Spleen (tissue), 13 donors: ENCODE measurements at regions of chr1 and their contacts with region 1.

Region 1: GRCh38 chr1:107529502-107530149 is 388.8 kb downstream of the NTNG1 start:
- DNase-seq: no peak
- H3K4me3 ChIP-seq: no peak overlapping the region
- H3K27ac ChIP-seq: no peak overlapping the region
- H3K4me1 ChIP-seq: peaks cover 0 to 3% (median 0%) of the 10 kb centered on the region in 6 donors
- H3K27me3 ChIP-seq: no peaks in the 10 kb centered on the region
- CTCF ChIP-seq: peak; percentile 39 to 80 (median 73)
- POLR2A ChIP-seq: no peak

Region 2: DNA sequence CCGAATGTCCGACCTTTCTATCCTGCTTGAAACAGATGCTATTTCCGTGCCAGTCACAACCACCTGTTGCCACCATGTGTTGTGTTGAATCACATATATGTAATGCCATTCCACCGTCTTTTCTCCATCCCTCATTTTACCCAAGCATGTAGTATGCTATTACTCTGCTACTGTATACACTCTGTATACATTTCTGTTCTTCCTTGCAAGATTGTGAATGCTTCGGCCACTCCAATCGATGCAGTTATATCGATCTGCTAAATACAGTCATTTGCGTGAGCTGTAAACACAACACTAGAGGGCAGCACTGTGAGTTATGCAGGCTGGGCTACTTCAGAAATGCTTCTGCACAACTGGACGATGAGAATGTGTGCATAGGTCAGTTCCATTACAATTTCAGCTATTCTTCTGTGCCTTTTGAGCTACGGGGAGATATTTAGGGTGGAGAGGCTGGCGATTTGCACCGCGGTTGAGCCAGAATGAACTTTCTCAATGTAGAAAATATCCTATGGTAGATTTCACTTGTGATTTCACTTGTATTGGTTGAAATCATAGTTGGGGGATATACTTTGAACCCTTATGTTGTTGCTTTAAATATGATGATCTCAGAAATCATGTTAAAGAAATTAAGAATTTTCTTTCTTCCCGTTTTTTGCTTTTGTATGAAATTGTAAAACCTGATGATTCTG is 98.9 kb before region 1 on chr1:
- intact Hi-C with region 1: loop called (anchors 5 kb)
- DNase-seq: no peak
- H3K4me3 ChIP-seq: no peak overlapping the region
- H3K27ac ChIP-seq: no peak overlapping the region
- H3K4me1 ChIP-seq: peaks cover 0 to 26% (median 5%) of the 10 kb centered on the region in 6 donors
- H3K27me3 ChIP-seq: no peaks in the 10 kb centered on the region
- CTCF ChIP-seq: peak in 10 of 11 experiments; percentile 29 to 65 (median 56)
- POLR2A ChIP-seq: no peak